Aorta (tissue), 5 donors: ENCODE measurements at regions of chr20 and their contacts with region 1.

Region 1: GRCh38 chr20:60062811-60063451 is 104.7 kb downstream of the CDH26 start:
- DNase-seq: peak in 1 of 2 donors; percentile 71
- ATAC-seq: peak; percentile 61
- H3K4me3 ChIP-seq: no peak overlapping the region
- H3K27ac ChIP-seq: peak overlapping the region in 1 of 2 donors; percentile 31
- H3K4me1 ChIP-seq: peaks cover 0 to 3% of the 10 kb centered on the region in 2 donors
- H3K27me3 ChIP-seq: no peaks in the 10 kb centered on the region

Region 2: DNA sequence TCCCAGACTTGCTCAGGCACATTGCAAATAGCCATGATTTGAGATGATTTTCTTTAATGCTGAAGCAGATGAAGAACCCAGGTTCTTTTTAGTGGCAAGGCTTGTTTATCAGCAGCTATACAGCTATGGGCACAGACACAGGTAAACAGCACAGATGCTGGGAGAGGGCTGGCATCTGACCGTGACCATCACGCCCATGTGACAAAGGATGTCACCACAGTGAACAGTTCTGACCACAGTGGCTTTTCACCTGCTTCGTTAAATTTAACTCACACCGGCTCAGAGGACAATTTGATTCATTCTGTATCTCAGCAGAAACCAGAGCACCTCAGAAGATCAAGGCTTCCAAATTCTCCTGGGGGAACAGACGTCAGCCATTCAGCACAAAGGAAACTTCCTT is 37.8 kb after region 1 on chr20:
- intact Hi-C with region 1: loop called in 1 of 2 experiments (anchors 5 kb)
- DNase-seq: no peak
- ATAC-seq: no peak
- H3K4me3 ChIP-seq: no peak overlapping the region
- H3K27ac ChIP-seq: no peak overlapping the region
- H3K4me1 ChIP-seq: no peaks in the 10 kb centered on the region
- H3K27me3 ChIP-seq: no peaks in the 10 kb centered on the region

Region 3: DNA sequence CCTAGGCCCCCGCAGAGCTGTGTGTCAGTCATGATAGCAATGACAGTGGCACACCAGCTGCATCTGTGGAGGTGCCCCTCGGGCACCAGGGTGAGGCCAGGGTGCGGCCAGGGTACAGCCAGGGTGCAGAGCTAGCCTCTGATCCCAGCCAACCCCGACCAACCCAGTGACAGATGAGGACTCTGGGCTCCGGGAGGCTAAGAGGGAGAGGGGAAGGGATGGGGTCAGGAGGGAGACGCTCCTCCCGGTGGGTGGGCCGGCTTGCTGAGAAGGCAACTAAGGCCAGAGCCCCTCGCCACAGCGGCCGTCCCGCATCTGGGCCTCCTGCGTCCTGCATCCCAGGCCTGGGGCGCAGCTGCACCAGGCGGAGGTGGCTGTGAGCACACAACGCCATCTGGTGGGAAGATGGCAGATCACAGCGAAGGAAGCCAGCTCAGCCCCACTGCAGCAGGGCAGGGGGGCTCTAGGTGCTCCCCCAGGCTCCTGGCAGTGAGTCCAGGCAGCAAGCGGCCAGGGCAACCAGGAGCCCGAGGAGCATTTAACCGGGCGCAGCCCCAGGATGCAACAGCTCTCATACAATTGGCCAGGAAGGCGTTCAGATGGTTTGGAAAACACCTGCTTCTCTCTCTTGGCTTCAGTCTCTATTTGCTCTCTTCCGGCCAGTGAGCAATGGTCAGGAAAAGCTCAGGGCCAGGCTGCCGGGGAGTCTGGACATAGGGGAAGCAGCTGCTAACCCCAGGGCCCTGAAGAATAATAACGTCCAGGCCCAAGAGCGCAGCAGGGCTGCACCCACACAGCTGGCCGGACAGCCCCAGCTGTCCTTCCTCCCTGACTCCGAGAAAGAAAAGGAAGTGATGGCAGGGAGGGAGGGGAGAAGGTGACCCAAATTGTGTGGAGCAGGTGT is 1833.4 kb after region 1 on chr20:
- intact Hi-C with region 1: loop called in 1 of 2 experiments (anchors 10 kb)
- DNase-seq: no peak
- ATAC-seq: peak; percentile 56
- H3K4me3 ChIP-seq: no peak overlapping the region
- H3K27ac ChIP-seq: no peak overlapping the region
- H3K4me1 ChIP-seq: no peaks in the 10 kb centered on the region
- H3K27me3 ChIP-seq: no peaks in the 10 kb centered on the region